CD4-positive, alpha-beta T cell (primary cell): ENCODE measurements at regions of chr21 and their contacts with region 1.

Region 1: GRCh38 chr21:29849735-29850176 is 90.0 kb downstream of the GRIK1 start:
- DNase-seq: peak in 13 of 14 experiments; percentile 2 to 62 (median 14)
- ATAC-seq: peak; percentile 90
- H3K4me3 ChIP-seq: no peak overlapping the region
- H3K4me3 Mint-ChIP-seq: no peak overlapping the region
- H3K27ac ChIP-seq: no peak overlapping the region
- H3K27ac Mint-ChIP-seq: no peak overlapping the region
- H3K4me1 ChIP-seq: no peaks in the 10 kb centered on the region
- H3K4me1 Mint-ChIP-seq: no peaks in the 10 kb centered on the region
- H3K27me3 ChIP-seq: no peaks in the 10 kb centered on the region
- H3K27me3 Mint-ChIP-seq: peaks cover 27% of the 10 kb centered on the region
- CTCF ChIP-seq: peak; percentile 73

Region 2: DNA sequence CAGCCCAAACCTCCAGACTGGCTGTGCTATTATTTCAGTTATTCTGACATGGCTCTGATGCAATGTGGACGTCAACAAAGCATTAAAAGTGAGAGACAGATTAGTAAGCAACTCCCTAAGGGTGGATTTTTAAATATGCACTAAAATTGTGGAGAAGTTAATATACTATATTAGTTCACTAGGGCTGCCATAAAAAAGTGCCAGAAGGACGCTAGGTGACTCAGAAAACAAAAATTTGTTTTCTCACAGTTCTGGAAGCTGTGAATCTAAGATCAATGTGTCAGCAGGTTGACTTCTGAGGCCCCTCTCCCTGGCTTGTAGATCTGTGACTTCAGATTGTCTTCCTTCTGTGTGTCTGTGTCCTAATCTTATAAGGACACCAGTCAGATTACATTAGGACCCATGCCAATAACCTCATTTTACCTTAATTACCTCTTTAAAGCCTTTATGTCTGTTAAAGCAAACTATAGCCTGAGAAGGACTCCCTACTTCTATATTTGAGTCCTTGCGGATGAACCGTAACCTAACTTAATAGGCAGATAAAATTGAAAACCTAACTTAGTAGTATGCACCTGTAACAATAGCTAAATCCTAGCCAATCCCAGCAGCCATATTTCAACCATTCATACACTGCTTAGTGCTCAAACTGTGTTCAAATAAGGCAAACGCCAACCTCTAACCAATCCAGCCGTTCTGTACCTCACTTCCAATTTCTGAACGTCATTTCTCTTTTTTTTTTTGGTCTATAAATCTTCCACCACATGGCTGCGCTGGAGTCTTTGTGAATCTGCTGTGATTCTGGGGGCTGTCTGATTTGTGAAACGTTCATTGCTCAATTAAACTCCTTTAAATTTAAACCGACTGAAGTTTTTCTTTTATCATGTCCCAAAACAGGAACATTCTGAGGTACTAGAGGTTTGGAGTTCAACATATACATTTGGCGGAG is 616.9 kb before region 1 on chr21:
- CTCF ChIA-PET with region 1: no interaction called
- POLR2A ChIA-PET with region 1: no interaction called
- intact Hi-C with region 1: no loop called
- DNase-seq: peak in 3 of 14 experiments; percentile 8 to 34 (median 29)
- ATAC-seq: no peak
- H3K4me3 ChIP-seq: no peak overlapping the region
- H3K4me3 Mint-ChIP-seq: no peak overlapping the region
- H3K27ac ChIP-seq: no peak overlapping the region
- H3K27ac Mint-ChIP-seq: no peak overlapping the region
- H3K4me1 ChIP-seq: no peaks in the 10 kb centered on the region
- H3K4me1 Mint-ChIP-seq: peaks cover 5% of the 10 kb centered on the region
- H3K27me3 ChIP-seq: no peaks in the 10 kb centered on the region
- H3K27me3 Mint-ChIP-seq: peaks cover 6% of the 10 kb centered on the region
- CTCF ChIP-seq: no peak

Region 3: GRCh38 chr21:29360799-29361765 is 488.7 kb before region 1 on chr21:
- CTCF ChIA-PET with region 1: no interaction called
- POLR2A ChIA-PET with region 1: interaction called, 3 read pairs
- intact Hi-C with region 1: loop called (anchors 1 to 2 kb)
- DNase-seq: peak in 3 of 14 experiments; percentile 28 to 45 (median 33)
- ATAC-seq: no peak
- H3K4me3 ChIP-seq: no peak overlapping the region
- H3K4me3 Mint-ChIP-seq: no peak overlapping the region
- H3K27ac ChIP-seq: no peak overlapping the region
- H3K27ac Mint-ChIP-seq: no peak overlapping the region
- H3K4me1 ChIP-seq: peaks cover 8% of the 10 kb centered on the region
- H3K4me1 Mint-ChIP-seq: peaks cover 13% of the 10 kb centered on the region
- H3K27me3 ChIP-seq: no peaks in the 10 kb centered on the region
- H3K27me3 Mint-ChIP-seq: no peaks in the 10 kb centered on the region
- CTCF ChIP-seq: peak; percentile 56